Natural killer cell (primary cell): ENCODE measurements at regions of chr11 and their contacts with region 1.

Region 1: GRCh38 chr11:62591448-62592145 is at the start of gene TUT1:
- DNase-seq: peak; percentile 91 to 99
- ATAC-seq: peak; percentile 84 to 95 (median 87)
- H3K4me3 ChIP-seq: peak within 1 kb of the TSS; percentile 58
- H3K4me3 Mint-ChIP-seq: peak within 1 kb of the TSS; percentile 98
- H3K27ac ChIP-seq: peak within 1 kb of the TSS; percentile 90
- H3K27ac Mint-ChIP-seq: peak within 1 kb of the TSS; percentile 94 to 97
- H3K4me1 ChIP-seq: peaks cover 32% of the 10 kb centered on the region
- H3K4me1 Mint-ChIP-seq: peaks cover 32 to 40% of the 10 kb centered on the region in 2 donors
- H3K27me3 ChIP-seq: no peaks in the 10 kb centered on the region
- H3K27me3 Mint-ChIP-seq: no peaks in the 10 kb centered on the region
- CTCF ChIP-seq: no peak
- total RNA-seq, gene TUT1: 20.0 to 28.9 (median 26.2) TPM

Region 2: DNA sequence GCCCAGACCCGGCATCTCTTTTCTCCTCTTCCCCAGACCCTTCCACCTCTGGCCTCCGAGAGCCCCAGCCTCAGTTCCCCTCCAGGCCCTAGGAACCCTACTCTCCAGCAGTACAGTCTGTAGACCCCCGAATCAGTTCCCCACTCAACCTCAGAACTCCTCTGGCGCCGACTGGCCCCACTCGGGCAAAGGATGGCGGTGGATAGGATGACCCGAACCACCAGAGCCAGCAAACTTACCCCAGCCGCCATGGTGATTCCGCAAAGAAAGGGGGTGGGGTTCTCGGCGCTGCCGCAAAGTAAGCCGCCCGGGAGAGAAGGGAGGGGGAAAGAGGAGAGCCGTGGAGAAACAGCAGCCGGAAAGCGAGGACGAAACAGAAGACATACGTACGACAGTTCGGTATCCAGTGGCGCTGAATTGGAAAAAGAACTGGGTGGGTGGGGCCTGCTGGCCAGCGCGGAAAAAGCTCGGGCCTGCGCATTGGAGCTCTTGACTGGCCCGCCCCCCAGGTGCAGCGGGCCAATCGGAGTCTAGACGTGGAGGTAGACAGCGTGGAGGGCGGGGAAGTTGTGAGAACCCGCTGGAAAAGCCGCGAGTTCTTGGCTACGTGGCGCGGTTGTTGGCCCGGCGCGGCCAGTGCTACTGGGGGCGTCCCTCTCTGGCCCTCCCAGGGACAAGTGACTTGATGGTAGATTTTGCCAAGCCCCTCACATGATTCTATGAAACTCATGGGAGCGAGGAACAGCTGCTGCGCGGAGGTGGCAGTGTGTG is 17.8 kb before region 1 on chr11 and contains the start of gene EEF1G:
- intact Hi-C with region 1: loop called (anchors 1 kb)
- DNase-seq: peak; percentile 95 to 99
- ATAC-seq: peak; percentile 94 to 98 (median 94)
- H3K4me3 ChIP-seq: peak within 1 kb of the TSS; percentile 94
- H3K4me3 Mint-ChIP-seq: peak within 1 kb of the TSS; percentile 99
- H3K27ac ChIP-seq: peak within 1 kb of the TSS; percentile 80
- H3K27ac Mint-ChIP-seq: peak within 1 kb of the TSS; percentile 92 to 95
- H3K4me1 ChIP-seq: peaks cover 27% of the 10 kb centered on the region
- H3K4me1 Mint-ChIP-seq: peaks cover 36 to 54% of the 10 kb centered on the region in 2 donors
- H3K27me3 ChIP-seq: no peaks in the 10 kb centered on the region
- H3K27me3 Mint-ChIP-seq: no peaks in the 10 kb centered on the region
- CTCF ChIP-seq: no peak
- total RNA-seq, gene EEF1G: 628 to 754 (median 714) TPM

Region 3: GRCh38 chr11:62678770-62679696 is 87.4 kb after region 1 on chr11 and contains the start of gene UBXN1:
- intact Hi-C with region 1: loop called (anchors 5 kb)
- DNase-seq: peak; percentile 79 to 92
- ATAC-seq: peak; percentile 85 to 91 (median 89)
- H3K4me3 ChIP-seq: peak within 1 kb of the TSS; percentile 98
- H3K4me3 Mint-ChIP-seq: peak within 1 kb of the TSS; percentile 93
- H3K27ac ChIP-seq: peak within 1 kb of the TSS; percentile 95
- H3K27ac Mint-ChIP-seq: peak within 1 kb of the TSS; percentile 95 to 99
- H3K4me1 ChIP-seq: peaks cover 21% of the 10 kb centered on the region
- H3K4me1 Mint-ChIP-seq: peaks cover 26 to 31% of the 10 kb centered on the region in 2 donors
- H3K27me3 ChIP-seq: no peaks in the 10 kb centered on the region
- H3K27me3 Mint-ChIP-seq: no peaks in the 10 kb centered on the region
- CTCF ChIP-seq: no peak
- total RNA-seq, gene UBXN1: 179 to 238 (median 238) TPM

Region 4: GRCh38 chr11:62705880-62706849 is 114.6 kb after region 1 on chr11:
- intact Hi-C with region 1: loop called (anchors 2 kb)
- DNase-seq: peak; percentile 93 to 97
- ATAC-seq: peak; percentile 74 to 87 (median 77)
- H3K4me3 ChIP-seq: peak overlapping the region; percentile 70
- H3K4me3 Mint-ChIP-seq: peak overlapping the region; percentile 94
- H3K27ac ChIP-seq: peak overlapping the region; percentile 89
- H3K27ac Mint-ChIP-seq: peak overlapping the region; percentile 91 to 97
- H3K4me1 ChIP-seq: peaks cover 50% of the 10 kb centered on the region
- H3K4me1 Mint-ChIP-seq: peaks cover 36 to 41% of the 10 kb centered on the region in 2 donors
- H3K27me3 ChIP-seq: no peaks in the 10 kb centered on the region
- H3K27me3 Mint-ChIP-seq: no peaks in the 10 kb centered on the region
- CTCF ChIP-seq: no peak

Region 5: DNA sequence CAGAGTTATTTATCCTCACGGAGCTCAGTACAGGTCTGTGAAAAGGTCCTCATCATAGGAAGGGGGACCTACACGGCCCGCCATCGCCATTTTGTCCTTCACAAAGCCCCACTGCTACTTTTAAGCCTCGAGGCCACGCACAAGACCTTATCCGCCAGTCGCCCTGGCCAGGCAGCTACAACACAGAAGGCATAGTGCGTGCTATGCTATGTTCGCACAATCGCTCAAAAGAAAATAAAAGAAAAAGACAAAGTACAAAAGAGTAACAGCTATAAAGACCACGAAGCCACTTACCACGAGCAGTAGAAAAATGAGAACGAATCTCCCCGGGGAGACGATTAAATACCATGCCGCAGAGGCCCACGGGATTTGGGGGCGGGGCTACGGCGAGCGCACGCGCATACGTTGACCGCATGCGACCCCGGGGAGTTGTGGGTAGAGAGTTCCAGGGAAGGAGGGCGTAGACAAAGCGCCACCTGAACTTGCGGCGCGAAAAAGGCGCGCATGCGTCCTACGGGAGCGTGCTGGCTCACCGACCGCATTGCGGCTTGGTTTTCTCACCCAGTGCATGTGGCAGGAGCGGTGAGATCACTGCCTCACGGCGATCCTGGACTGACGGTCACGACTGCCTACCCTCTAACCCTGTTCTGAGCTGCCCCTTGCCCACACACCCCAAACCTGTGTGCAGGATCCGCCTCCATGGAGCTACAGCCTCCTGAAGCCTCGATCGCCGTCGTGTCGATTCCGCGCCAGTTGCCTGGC is 264.2 kb after region 1 on chr11:
- intact Hi-C with region 1: loop called (anchors 5 kb)
- DNase-seq: peak; percentile 97 to 100
- ATAC-seq: peak; percentile 92 to 97 (median 92)
- H3K4me3 ChIP-seq: peak overlapping the region; percentile 79
- H3K4me3 Mint-ChIP-seq: peak overlapping the region; percentile 98
- H3K27ac ChIP-seq: peak overlapping the region; percentile 64
- H3K27ac Mint-ChIP-seq: peak overlapping the region; percentile 95 to 97
- H3K4me1 ChIP-seq: peaks cover 31% of the 10 kb centered on the region
- H3K4me1 Mint-ChIP-seq: peaks cover 45% of the 10 kb centered on the region in 2 donors
- H3K27me3 ChIP-seq: no peaks in the 10 kb centered on the region
- H3K27me3 Mint-ChIP-seq: no peaks in the 10 kb centered on the region
- CTCF ChIP-seq: no peak

Region 6: GRCh38 chr11:62905927-62906531 is 314.4 kb after region 1 on chr11:
- intact Hi-C with region 1: no loop called
- DNase-seq: peak; percentile 74 to 88
- ATAC-seq: peak; percentile 69 to 97 (median 87)
- H3K4me3 ChIP-seq: no peak overlapping the region
- H3K4me3 Mint-ChIP-seq: no peak overlapping the region
- H3K27ac ChIP-seq: no peak overlapping the region
- H3K27ac Mint-ChIP-seq: no peak overlapping the region
- H3K4me1 ChIP-seq: no peaks in the 10 kb centered on the region
- H3K4me1 Mint-ChIP-seq: peaks cover 6 to 9% of the 10 kb centered on the region in 2 donors
- H3K27me3 ChIP-seq: no peaks in the 10 kb centered on the region
- H3K27me3 Mint-ChIP-seq: peaks cover 7 to 22% of the 10 kb centered on the region in 2 donors
- CTCF ChIP-seq: peak; percentile 89